ENCODE measurements at regions of chr14 and their contacts with region 1.

Region 1: DNA sequence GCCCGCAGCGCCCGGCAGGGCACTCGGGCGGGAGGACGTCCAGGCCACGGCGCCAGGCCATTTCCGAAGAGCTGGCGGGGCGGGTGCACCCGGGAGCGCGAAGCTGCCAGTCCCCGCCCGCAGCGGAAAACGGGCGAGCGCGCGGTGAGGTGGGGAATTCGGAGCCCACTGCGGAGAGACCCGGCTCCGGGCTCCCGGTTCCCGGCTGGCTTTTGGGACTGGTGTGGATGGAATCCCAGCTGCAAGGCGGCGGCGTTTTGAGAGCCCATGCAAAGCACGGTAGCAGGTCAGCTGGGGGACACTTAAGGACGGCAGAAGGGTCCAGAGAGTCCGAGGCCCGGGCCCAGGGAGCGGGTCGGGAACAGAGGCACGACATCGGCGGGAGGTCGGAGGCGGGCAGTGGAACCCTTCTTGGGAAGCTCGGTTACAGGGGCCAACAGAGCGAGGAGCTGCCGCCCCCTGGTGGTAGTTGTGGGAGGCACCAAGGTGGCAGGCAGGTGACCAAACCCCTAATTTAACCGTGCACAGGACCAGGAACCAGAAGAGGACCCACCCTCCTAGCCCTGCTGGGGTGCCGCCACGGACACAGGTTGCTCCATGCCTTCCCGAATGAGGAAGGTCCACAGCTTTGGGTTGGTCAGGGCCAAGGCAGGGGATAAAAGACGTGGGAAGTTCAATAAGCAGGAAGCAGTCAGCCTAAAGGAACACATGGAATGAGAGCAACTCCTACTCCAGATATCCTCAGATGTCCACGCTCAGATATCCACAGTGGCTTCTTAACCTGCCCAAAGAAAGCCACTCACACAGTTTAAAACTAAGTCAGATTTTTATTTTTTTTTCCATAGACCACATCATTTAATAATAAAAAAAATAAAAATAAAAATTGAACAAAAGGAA is 685 bp upstream of the CDH24 start:
- DNase-seq: peak; percentile 79 to 92 (median 86)
- H3K4me3 ChIP-seq: peak overlapping the region; percentile 57 to 82 (median 73)
- H3K27ac ChIP-seq: peak overlapping the region in 53 of 59 donors; percentile 3 to 88 (median 77)
- H3K27me3 ChIP-seq: no peaks in the 10 kb centered on the region
- CTCF ChIP-seq: peak; percentile 87 to 100 (median 96)

Region 2: GRCh38 chr14:22556990-22557623 is 500.9 kb before region 1 on chr14:
- intact Hi-C with region 1: loop called in 1 of 2 experiments (anchors 10 kb)
- DNase-seq: peak; percentile 60 to 85 (median 76)
- H3K4me3 ChIP-seq: peak overlapping the region; percentile 13 to 66 (median 46)
- H3K27ac ChIP-seq: peak overlapping the region in 41 of 59 donors; percentile 5 to 82 (median 55)
- H3K27me3 ChIP-seq: no peaks in the 10 kb centered on the region
- CTCF ChIP-seq: peak in 55 of 56 donors; percentile 80 to 100 (median 99)

Region 3: GRCh38 chr14:22986508-22987054 is 71.4 kb before region 1 on chr14:
- intact Hi-C with region 1: loop called (anchors 1 to 2 kb)
- DNase-seq: peak; percentile 83 to 98 (median 90)
- H3K4me3 ChIP-seq: no peak overlapping the region
- H3K27ac ChIP-seq: no peak overlapping the region
- H3K27me3 ChIP-seq: peaks cover 0 to 14% (median 9%) of the 10 kb centered on the region in 45 donors
- CTCF ChIP-seq: peak; percentile 77 to 99 (median 96)

Region 4: GRCh38 chr14:23006544-23007419 is 51.2 kb before region 1 on chr14:
- intact Hi-C with region 1: loop called in 1 of 2 experiments (anchors 2 kb)
- DNase-seq: peak; percentile 93 to 99 (median 98)
- H3K4me3 ChIP-seq: peak overlapping the region; percentile 62 to 98 (median 79)
- H3K27ac ChIP-seq: peak overlapping the region; percentile 91 to 100 (median 99)
- H3K27me3 ChIP-seq: no peaks in the 10 kb centered on the region
- CTCF ChIP-seq: peak in 49 of 56 donors; percentile 2 to 65 (median 41)

Region 5: GRCh38 chr14:23034483-23035302 is 23.3 kb before region 1 on chr14 and contains the start of gene PSMB5:
- intact Hi-C with region 1: loop called in 1 of 2 experiments (anchors 2 kb)
- DNase-seq: peak; percentile 80 to 94 (median 90)
- H3K4me3 ChIP-seq: peak within 1 kb of the TSS; percentile 68 to 100 (median 91)
- H3K27ac ChIP-seq: peak within 1 kb of the TSS; percentile 87 to 100 (median 98)
- H3K27me3 ChIP-seq: no peaks in the 10 kb centered on the region
- CTCF ChIP-seq: peak in 27 of 56 donors; percentile 1 to 54 (median 23)
- total RNA-seq, gene PSMB5: 63.4 to 136 (median 100) TPM

Measured in dorsolateral prefrontal cortex (tissue), 120 donors.